OCI-LY7 (cell line): ENCODE measurements at regions of chr2 and their contacts with region 1.

Region 1: GRCh38 chr2:16713011-16713423 is 47.4 kb upstream of the CYRIA start:
- DNase-seq: peak; percentile 53
- H3K4me3 ChIP-seq: peak overlapping the region; percentile 40
- H3K27ac ChIP-seq: peak overlapping the region; percentile 14
- H3K4me1 ChIP-seq: peaks cover 30% of the 10 kb centered on the region
- CTCF ChIP-seq: no peak

Region 2: GRCh38 chr2:16700551-16701259 is 12.3 kb before region 1 on chr2:
- CTCF ChIA-PET with region 1: no interaction called
- POLR2A ChIA-PET with region 1: interaction called, 12 read pairs
- intact Hi-C with region 1: no loop called
- DNase-seq: no peak
- H3K4me3 ChIP-seq: no peak overlapping the region
- H3K27ac ChIP-seq: no peak overlapping the region
- H3K4me1 ChIP-seq: no peaks in the 10 kb centered on the region
- CTCF ChIP-seq: no peak

Region 3: GRCh38 chr2:16756831-16757644 is 44.0 kb after region 1 on chr2:
- CTCF ChIA-PET with region 1: no interaction called
- POLR2A ChIA-PET with region 1: no interaction called
- intact Hi-C with region 1: no loop called
- DNase-seq: peak; percentile 79
- H3K4me3 ChIP-seq: no peak overlapping the region
- H3K27ac ChIP-seq: no peak overlapping the region
- H3K4me1 ChIP-seq: peaks cover 4% of the 10 kb centered on the region
- CTCF ChIP-seq: peak; percentile 96

Region 4: DNA sequence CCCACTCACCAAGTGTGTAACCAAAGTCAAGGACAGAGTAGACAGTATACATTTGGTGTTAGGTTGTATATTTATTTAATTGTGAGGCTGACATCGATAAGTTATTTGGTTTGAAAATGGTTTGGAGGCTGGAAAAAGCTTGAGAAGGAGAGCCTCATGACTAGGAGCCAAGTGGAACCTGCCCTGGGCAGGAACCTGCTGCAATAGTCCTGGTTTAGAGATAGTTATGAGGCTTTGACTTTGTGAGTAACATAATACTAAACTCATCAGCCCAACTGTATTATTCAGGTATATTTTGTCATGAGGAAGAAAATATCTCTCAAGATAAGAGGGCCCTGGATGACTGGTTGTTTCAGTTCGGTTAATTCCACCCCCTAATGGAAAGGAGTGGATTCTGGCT is 186.9 kb after region 1 on chr2:
- CTCF ChIA-PET with region 1: no interaction called
- POLR2A ChIA-PET with region 1: no interaction called
- intact Hi-C with region 1: no loop called
- DNase-seq: no peak
- H3K4me3 ChIP-seq: no peak overlapping the region
- H3K27ac ChIP-seq: no peak overlapping the region
- H3K4me1 ChIP-seq: no peaks in the 10 kb centered on the region
- CTCF ChIP-seq: no peak

Region 5: GRCh38 chr2:18527326-18527725 is 1814.3 kb after region 1 on chr2:
- CTCF ChIA-PET with region 1: no interaction called
- POLR2A ChIA-PET with region 1: no interaction called
- intact Hi-C with region 1: no loop called
- DNase-seq: no peak
- H3K4me3 ChIP-seq: no peak overlapping the region
- H3K27ac ChIP-seq: no peak overlapping the region
- H3K4me1 ChIP-seq: no peaks in the 10 kb centered on the region
- CTCF ChIP-seq: no peak